Activated B cell treated with CpG ODN at 0.5 μM for 24 hours (primary cell): ENCODE measurements at regions of chr10 and their contacts with region 1.

Region 1: DNA sequence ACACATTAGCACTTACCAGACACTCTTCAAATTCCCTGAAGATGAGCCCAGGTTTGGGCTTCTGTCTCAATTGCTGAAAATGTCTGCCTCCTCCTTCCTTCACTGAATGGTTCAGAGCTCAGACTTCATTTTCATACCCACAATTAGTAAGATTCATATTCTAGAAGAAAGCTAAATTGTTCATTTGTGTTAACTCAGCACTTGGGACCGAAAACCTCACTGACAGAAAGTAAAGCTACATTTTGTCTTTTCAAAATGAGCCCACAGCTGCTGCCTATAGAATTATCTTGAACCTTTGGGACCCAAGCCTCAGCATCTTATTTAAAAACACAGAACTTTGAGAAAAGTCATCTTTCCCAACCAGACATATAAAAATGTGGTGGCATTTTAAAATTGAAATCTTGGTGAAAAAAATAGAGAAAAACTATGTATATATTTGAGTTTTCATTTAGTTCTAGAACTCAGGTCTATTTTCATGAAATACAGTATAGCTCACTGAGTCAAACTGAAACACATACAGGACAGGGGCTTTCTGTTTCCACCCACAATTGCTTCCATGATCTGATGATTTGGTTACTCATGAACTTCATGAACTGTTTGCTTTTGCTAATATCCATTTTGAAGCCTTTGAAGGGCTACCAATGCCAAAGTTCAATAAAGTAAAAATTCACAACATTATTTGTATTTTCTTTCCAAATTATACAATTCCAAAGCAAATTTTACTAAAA is 119.1 kb upstream of the PFKP start:
- DNase-seq: no peak
- ATAC-seq: no peak
- H3K4me3 Mint-ChIP-seq: no peak overlapping the region
- H3K27ac Mint-ChIP-seq: peak overlapping the region; percentile 46
- H3K4me1 Mint-ChIP-seq: peaks cover 20% of the 10 kb centered on the region
- H3K27me3 Mint-ChIP-seq: peaks cover 23% of the 10 kb centered on the region
- CTCF ChIP-seq: no peak

Region 2: GRCh38 chr10:2425320-2425719 is 523.0 kb before region 1 on chr10:
- CTCF ChIA-PET with region 1: no interaction called
- POLR2A ChIA-PET with region 1: no interaction called
- intact Hi-C with region 1: no loop called
- DNase-seq: no peak
- ATAC-seq: no peak
- H3K4me3 Mint-ChIP-seq: no peak overlapping the region
- H3K27ac Mint-ChIP-seq: no peak overlapping the region
- H3K4me1 Mint-ChIP-seq: no peaks in the 10 kb centered on the region
- H3K27me3 Mint-ChIP-seq: peaks cover 4% of the 10 kb centered on the region
- CTCF ChIP-seq: no peak

Region 3: GRCh38 chr10:2936816-2937215 is 11.5 kb before region 1 on chr10:
- CTCF ChIA-PET with region 1: no interaction called
- POLR2A ChIA-PET with region 1: no interaction called
- intact Hi-C with region 1: no loop called
- DNase-seq: no peak
- ATAC-seq: no peak
- H3K4me3 Mint-ChIP-seq: no peak overlapping the region
- H3K27ac Mint-ChIP-seq: no peak overlapping the region
- H3K4me1 Mint-ChIP-seq: no peaks in the 10 kb centered on the region
- H3K27me3 Mint-ChIP-seq: peaks cover 18% of the 10 kb centered on the region
- CTCF ChIP-seq: no peak

Region 4: GRCh38 chr10:3036155-3037021 is 88.1 kb after region 1 on chr10:
- CTCF ChIA-PET with region 1: no interaction called
- POLR2A ChIA-PET with region 1: no interaction called
- intact Hi-C with region 1: loop called (anchors 1 kb)
- DNase-seq: no peak
- ATAC-seq: peak; percentile 90
- H3K4me3 Mint-ChIP-seq: peak overlapping the region; percentile 25
- H3K27ac Mint-ChIP-seq: peak overlapping the region; percentile 78
- H3K4me1 Mint-ChIP-seq: peaks cover 45% of the 10 kb centered on the region
- H3K27me3 Mint-ChIP-seq: no peaks in the 10 kb centered on the region
- CTCF ChIP-seq: no peak